ENCODE measurements at regions of chr12 and their contacts with region 1.

Region 1: GRCh38 chr12:113088971-113089756 is 32.6 kb downstream of the DTX1 start:
- DNase-seq: peak; percentile 75
- ATAC-seq: peak; percentile 70
- H3K4me3 Mint-ChIP-seq: peak overlapping the region; percentile 63
- H3K27ac Mint-ChIP-seq: peak overlapping the region; percentile 87
- H3K4me1 Mint-ChIP-seq: peaks cover 63% of the 10 kb centered on the region
- H3K27me3 Mint-ChIP-seq: no peaks in the 10 kb centered on the region
- CTCF ChIP-seq: no peak

Region 2: DNA sequence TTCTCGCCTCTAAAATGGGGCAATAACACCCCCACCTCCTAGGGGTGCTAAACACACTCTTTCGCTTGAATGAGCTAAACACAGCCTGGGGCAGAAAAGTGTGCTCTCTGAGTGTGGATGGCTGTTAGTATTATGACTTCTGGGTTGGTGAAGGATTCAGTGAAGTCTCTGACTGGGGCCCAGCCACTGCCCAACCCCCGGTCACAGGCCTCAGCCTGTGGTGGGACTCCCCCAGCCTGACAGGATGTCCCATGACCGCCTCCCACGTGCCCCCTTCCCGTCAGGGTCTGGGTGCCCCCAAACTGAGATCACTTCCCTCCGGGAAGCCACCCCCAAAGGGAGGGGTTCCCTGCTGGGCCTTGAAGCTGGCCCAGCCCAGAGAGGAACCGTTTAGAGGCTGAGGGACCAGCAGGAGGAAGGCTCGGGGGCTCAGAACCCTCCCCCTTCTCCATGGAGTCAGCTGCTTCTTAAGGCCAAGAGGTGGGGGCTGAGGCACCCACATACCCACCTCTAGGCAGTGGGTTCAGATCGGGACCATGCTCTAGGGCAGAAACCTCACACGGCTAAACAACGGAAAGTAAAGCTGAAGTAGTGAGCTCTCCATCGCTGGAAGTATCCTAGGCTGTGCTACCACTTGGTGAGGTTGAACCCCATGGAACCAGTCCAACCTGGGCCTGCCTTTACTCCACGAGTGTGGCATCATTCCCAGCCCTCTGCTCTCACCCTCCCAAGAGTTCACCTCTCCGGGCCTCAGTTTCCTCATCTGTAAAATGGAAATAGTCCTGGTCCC is 18.9 kb before region 1 on chr12:
- CTCF ChIA-PET with region 1: interaction called, 4 read pairs
- POLR2A ChIA-PET with region 1: interaction called, 11 read pairs
- intact Hi-C with region 1: no loop called
- DNase-seq: peak; percentile 92
- ATAC-seq: peak; percentile 90
- H3K4me3 Mint-ChIP-seq: peak overlapping the region; percentile 54
- H3K27ac Mint-ChIP-seq: peak overlapping the region; percentile 87
- H3K4me1 Mint-ChIP-seq: peaks cover 54% of the 10 kb centered on the region
- H3K27me3 Mint-ChIP-seq: no peaks in the 10 kb centered on the region
- CTCF ChIP-seq: no peak

Measured in activated CD8-positive, alpha-beta T cell treated with anti-CD3 and anti-CD28 coated beads for 36 hours (primary cell).